ENCODE measurements at regions of chr2 and their contacts with region 1.

Region 1: DNA sequence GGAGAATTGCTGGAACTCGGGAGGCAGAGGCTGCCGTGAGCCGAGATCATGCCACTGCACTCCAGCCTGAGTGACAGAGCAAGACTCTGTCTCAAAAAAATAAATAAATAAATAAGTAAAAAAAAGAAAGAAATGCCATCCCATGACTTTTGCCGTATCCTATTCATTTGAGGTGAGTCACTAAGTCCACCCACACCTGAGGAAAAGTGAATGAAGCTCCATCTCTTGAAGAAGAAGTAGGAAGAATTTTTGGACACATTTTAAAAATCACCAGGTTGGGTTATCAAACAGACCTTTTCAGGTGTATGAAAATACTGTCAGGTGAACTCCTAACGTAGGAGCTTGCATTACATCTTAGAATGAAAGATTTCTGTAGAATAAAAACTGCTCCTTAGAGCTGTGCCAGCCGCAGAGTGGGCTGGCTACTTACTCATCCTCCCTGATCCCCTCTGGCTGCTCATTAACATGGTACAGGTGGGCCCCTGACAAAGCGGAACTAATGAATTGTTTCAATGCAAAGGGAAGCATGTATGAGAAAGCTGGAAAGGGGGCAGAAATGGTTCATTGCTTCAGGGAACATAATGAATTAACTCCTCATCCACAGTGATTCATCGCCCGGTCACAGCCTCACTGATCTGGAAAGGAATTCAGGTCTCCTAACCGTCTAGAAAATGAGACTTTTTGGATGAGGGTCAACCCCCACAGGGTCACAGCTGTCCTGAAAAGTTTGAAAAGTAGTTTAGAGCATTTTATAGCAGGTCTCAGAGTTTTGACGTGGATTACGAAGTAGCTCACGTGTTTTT is 191.4 kb downstream of the SPP2 start:
- DNase-seq: peak; percentile 93
- H3K4me3 ChIP-seq: peak overlapping the region in 2 of 3 experiments; percentile 1 to 27
- H3K27ac ChIP-seq: peak overlapping the region; percentile 95
- H3K4me1 ChIP-seq: peaks cover 52% of the 10 kb centered on the region
- H3K27me3 ChIP-seq: no peaks in the 10 kb centered on the region
- CTCF ChIP-seq: no peak

Region 2: DNA sequence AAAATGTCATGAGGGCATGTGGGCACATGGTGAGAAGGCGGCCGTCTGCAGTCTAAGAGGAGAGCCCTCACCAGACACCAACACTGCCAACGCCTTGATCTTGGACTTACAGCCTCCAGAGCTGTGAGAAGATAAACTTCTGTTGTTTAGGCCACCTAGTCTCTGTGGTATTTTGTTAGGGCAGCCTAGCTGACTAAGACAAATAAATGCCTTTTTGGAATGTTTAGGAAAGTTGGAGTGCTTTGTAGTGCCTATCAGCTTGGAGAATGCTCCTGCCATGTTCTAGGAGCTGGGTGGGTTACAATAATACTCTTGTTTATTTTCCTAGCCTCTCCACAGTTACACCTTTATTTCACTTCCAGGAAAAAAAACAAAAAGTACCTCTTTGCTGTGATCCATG is 99.3 kb before region 1 on chr2:
- CTCF ChIA-PET with region 1: interaction called, 4 read pairs
- dilution Hi-C with region 1: loop called (anchors 5 kb)
- in situ Hi-C with region 1: loop called in 1 of 2 experiments (anchors 5 kb)
- intact Hi-C with region 1: no loop called
- DNase-seq: no peak
- H3K4me3 ChIP-seq: no peak overlapping the region
- H3K27ac ChIP-seq: no peak overlapping the region
- H3K4me1 ChIP-seq: peaks cover 44% of the 10 kb centered on the region
- H3K27me3 ChIP-seq: no peaks in the 10 kb centered on the region
- CTCF ChIP-seq: no peak

Region 3: DNA sequence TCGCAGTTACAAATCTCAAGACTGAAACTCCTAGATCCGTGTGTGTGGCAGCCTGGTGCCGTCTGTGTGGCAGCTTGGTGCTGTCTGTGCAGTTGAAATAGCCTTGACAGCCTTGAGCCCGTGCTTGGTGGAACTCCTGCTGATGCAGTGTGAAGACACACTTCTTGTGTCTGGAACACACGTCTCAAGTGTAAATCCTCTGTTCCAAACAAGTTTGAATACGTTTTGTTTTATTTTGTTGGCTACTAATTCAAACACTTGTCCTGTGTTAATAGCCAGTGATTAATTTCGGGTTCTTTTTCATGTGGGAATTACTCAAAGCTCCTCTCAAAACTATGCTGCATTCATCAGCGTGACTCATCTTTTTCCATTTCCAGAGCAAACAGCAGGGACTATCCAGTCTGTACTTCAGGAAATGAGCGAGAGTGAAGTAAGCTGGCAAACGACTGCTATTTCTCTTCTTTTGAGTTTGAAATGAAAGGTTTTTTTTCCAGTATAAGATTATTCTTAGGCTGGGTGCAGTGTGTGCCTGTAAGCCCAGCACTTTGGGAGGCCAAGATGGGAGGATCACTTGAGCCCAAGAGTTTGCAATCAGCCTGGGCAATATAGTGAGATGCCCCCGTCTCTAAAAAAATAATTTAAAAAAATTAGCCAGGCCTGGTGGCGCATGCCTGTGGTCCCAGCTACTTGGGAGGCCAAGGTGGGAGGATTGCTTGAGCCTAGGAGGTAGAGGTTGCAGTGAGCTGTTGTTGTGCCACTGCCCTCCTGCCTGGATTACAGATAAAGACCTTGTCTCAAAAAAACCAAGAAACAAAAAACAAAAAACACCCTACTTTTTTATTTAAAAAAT is 38.5 kb before region 1 on chr2:
- CTCF ChIA-PET with region 1: no interaction called
- dilution Hi-C with region 1: no loop called
- in situ Hi-C with region 1: no loop called
- intact Hi-C with region 1: loop called (anchors 1 kb)
- DNase-seq: peak; percentile 99
- H3K4me3 ChIP-seq: no peak overlapping the region
- H3K27ac ChIP-seq: peak overlapping the region; percentile 67
- H3K4me1 ChIP-seq: peaks cover 16% of the 10 kb centered on the region
- H3K27me3 ChIP-seq: no peaks in the 10 kb centered on the region
- CTCF ChIP-seq: no peak

Region 4: DNA sequence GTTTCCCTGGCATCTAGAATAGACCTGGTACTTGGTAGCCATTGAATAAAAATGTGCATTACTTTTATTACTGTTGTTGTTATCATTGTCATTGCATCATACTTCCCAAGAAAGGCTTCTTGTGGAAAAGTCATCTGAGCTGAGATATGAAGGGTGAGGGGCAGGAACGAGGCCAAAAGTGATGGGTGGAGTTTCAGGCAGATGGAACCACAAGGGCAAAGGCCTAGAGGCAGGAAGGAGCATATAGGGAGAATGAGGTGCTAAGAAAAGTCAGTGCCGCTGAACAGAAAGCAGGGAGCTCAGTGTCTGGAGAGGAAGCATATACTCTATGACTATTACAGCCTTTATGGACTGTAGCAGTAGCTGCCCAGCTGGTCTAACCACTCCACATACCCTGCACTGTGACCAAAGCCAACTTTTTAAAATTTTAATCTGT is 27.9 kb after region 1 on chr2:
- CTCF ChIA-PET with region 1: interaction called, 12 read pairs
- dilution Hi-C with region 1: no loop called
- in situ Hi-C with region 1: no loop called
- intact Hi-C with region 1: no loop called
- DNase-seq: peak; percentile 20
- H3K4me3 ChIP-seq: no peak overlapping the region
- H3K27ac ChIP-seq: no peak overlapping the region
- H3K4me1 ChIP-seq: peaks cover 6% of the 10 kb centered on the region
- H3K27me3 ChIP-seq: no peaks in the 10 kb centered on the region
- CTCF ChIP-seq: no peak

Measured in mammary epithelial cell (primary cell).